Activated CD8-positive, alpha-beta memory T cell treated with anti-CD3 and anti-CD28 coated beads, Interleukin-2, amount 10 ng/mL, durations not matched to agents 7 days and 5 days (primary cell): ENCODE measurements at regions of chr16 and their contacts with region 1.

Region 1: DNA sequence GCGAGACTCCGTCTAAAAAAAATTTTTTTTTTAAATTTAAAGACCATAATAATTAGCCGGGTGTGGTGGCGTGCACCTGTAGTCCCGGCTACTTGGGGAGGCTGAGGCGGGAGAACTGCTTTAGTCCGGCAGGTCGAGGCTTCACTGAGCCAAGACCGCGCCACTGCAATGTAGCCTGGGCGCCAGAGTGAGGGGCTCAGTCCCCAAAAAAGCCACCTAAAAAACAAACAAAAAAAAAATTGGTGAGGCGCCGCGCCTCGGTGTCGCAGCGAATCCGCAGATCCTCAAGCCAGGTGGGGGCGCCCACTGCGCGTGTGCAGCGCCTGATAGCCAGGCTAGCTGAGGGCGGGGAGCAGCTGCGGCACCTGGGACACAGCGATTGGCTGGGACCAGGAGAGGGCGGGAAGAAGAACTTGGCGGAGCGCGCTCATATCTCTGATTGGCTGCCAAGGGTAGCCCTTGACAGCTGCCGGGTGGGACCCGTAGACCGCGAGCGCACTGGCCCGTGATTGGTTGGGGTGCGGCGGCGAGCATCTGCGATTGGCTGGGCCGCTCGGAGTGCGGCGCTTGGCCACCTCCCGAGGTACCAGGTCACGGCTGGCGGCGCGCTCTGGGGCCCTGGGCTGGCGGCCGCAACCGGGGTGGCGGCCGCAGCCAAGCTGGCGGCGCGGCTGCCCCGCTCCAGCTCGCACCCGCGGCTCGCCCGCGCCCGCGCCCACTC is 9.0 kb upstream of the CLDN9 start:
- DNase-seq: peak; percentile 99
- ATAC-seq: peak; percentile 99
- H3K4me3 Mint-ChIP-seq: peak overlapping the region; percentile 45
- H3K27ac Mint-ChIP-seq: no peak overlapping the region
- H3K4me1 Mint-ChIP-seq: peaks cover 31% of the 10 kb centered on the region
- H3K27me3 Mint-ChIP-seq: peaks cover 33% of the 10 kb centered on the region

Region 2: DNA sequence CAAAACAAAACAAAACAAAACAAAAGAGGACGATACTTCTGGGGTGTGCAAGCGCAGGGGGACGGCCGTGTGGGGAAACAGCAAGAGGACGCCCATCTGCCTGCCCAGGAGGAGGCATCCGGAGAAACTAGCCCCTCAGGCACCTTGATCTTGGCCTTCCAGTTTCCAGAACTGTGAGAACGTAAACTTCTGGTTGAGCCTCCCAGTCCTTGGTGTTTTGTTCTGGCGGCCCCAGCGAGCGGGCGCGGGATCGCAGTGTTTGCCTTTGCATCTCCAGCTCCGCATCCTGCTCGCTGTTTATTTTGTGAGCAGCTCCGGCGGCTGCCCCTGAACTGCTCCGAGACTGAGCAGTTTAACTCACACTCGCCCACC is 41.6 kb after region 1 on chr16:
- CTCF ChIA-PET with region 1: interaction called, 10 read pairs
- DNase-seq: peak; percentile 74
- ATAC-seq: peak; percentile 41
- H3K4me3 Mint-ChIP-seq: peak overlapping the region; percentile 88
- H3K27ac Mint-ChIP-seq: peak overlapping the region; percentile 83
- H3K4me1 Mint-ChIP-seq: peaks cover 40% of the 10 kb centered on the region
- H3K27me3 Mint-ChIP-seq: peaks cover 11% of the 10 kb centered on the region

Region 3: DNA sequence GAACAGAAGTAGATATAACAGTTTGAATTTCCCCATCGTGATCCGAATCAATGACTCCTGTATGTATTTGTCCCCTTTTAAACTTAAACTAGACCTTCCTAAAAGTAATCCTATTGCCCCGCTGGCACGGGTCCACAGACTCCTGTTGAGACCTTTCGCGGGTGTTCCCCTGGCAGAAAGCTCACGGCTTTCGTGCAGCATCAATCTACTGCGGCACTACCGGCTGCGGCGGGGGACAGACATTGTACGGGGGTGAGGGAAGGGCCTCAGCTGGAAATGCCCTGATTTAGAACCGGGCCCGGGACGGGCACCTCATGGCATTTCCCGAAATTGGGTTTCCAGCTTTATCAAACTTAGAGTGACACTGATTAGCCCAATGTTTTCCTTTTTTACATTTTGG is 76.3 kb after region 1 on chr16:
- CTCF ChIA-PET with region 1: no interaction called
- DNase-seq: no peak
- ATAC-seq: no peak
- H3K4me3 Mint-ChIP-seq: no peak overlapping the region
- H3K27ac Mint-ChIP-seq: no peak overlapping the region
- H3K4me1 Mint-ChIP-seq: peaks cover 62% of the 10 kb centered on the region
- H3K27me3 Mint-ChIP-seq: no peaks in the 10 kb centered on the region